H1 (cell line): ENCODE measurements at regions of chr9 and their contacts with region 1.

Region 1: DNA sequence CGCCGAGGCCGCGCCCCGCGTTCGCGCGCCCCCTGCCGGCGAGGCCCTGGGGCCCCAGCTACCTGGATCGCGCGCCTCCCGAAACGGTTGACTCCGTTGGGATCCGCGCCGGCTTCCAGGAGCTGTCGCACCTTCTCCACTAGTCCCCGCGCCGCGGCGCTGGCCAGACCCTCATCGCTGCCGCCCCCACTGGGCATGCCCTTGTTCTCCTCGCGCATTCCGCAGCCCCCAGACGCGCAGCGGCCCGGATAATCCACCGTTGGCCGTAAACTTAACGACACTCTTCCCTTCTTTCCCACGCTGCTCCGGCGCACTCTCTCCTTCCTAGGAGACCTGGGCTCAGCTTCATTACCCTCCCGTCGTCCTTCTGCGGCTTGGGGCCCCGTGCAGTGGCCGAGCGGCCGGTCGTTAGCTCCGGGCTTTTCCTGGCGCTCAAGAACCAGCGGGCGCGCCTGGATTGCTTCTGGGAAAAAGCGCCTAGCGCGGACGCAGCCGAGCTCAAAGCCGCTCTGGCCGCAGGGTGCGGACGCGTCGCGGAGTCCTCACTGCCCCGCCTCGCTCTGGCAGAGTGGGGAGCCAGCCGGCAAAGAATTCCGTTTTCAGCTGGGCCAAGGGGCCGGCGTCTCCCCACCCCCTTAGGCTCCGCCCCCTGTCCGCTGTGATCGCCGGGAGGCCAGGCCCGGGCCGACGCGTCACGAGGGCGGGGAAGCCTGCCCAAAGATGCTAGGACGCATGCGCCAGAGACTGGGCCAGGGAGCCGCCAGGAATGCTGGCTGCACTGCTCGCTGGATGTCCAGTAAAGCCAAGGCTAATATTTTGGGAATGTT is at the start of gene CDKN2B:
- DNase-seq: peak in 1 of 2 experiments; percentile 97
- H3K4me3 ChIP-seq: peak within 1 kb of the TSS; percentile 44 to 78 (median 70)
- H3K27ac ChIP-seq: no peak within 1 kb of the TSS
- H3K4me1 ChIP-seq: peaks cover 3 to 11% (median 5%) of the 10 kb centered on the region in 4 experiments; a peak in 6 of 7 replicates
- H3K27me3 ChIP-seq: peaks cover 28 to 63% (median 45%) of the 10 kb centered on the region in 4 experiments
- CTCF ChIP-seq: peak; percentile 82 to 88 (median 88)
- EP300 ChIP-seq: no peak
- POLR2A ChIP-seq: peak in 1 of 2 experiments; percentile 61; a peak in 2 of 3 replicates
- RAD21 ChIP-seq: peak; percentile 57 to 67
- total RNA-seq, gene CDKN2B: 0.31 and 0.88 TPM in 2 replicates

Region 2: DNA sequence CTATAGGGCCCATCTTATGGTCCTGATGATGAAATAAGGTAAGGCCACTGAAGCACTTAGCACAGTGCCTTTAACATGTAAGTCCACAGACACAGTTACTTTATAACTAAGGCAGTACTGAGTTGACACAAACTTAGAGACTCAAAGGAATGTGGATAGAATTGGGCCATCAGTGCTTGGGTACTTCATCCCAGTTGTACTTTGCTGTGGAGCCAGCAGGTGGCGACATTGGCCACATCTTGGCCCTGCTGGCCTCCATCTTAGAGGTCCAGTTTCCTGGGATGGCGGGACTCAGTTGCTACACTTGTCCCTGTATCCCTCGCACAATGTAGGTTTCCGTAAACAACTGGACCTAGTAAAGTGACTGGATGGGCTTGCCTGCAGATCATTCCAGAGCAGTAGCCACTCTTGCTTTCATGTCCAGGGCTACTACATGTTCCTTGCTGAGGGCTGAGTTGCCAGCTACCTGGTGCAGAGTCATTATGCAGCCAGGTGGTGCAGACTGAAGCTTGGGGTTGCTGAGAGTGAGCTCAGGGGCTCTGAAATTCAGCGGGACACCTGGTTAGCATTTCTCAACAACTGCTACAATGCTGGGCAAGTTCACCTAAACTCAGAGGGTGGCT is 195.9 kb before region 1 on chr9:
- CTCF ChIA-PET with region 1: interaction called, 36 read pairs
- POLR2A ChIA-PET with region 1: no interaction called
- DNase-seq: peak in 1 of 2 experiments; percentile 81
- H3K4me3 ChIP-seq: no peak overlapping the region
- H3K27ac ChIP-seq: no peak overlapping the region
- H3K4me1 ChIP-seq: peaks cover 0 to 2% (median under 1%) of the 10 kb centered on the region in 4 experiments; a peak in 2 of 7 replicates
- H3K27me3 ChIP-seq: no peaks in the 10 kb centered on the region
- CTCF ChIP-seq: peak; percentile 80 to 98 (median 88)
- EP300 ChIP-seq: no peak
- POLR2A ChIP-seq: no peak
- RAD21 ChIP-seq: peak; percentile 84 to 88

Region 3: DNA sequence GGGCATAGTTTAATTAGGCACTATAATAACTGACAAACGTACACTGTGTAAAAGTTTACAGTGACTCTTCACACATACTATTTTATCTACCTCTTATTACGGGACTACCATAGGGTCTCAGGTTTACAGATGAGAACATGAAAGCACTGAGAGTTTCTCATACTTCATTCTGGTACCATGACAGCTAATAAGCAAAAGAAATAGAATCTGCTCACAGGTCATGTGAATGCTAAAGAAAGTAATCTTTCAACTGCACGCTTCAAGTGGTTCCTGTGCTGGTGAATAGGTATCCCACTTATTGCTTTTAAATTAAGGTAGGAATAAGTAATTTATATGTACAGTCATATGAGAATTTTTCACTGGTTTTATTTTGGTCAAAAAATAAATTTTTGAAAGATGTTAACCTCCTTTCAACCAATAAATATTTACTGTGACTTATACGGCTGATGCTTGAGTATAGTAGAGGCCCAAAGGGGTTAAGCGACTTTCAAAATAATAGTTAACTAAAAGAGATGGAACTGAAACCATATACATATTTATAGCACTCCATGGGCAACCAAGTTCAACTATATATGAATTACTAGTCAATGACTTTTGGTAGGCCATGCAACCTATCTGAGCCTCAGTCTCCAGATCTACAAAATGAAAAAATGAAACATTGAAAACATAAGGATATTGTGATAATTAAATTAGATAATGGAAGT is 22.8 kb before region 1 on chr9:
- CTCF ChIA-PET with region 1: interaction called, 46 read pairs
- POLR2A ChIA-PET with region 1: no interaction called
- DNase-seq: no peak
- H3K4me3 ChIP-seq: no peak overlapping the region
- H3K27ac ChIP-seq: no peak overlapping the region
- H3K4me1 ChIP-seq: peaks cover 1 to 5% (median 3%) of the 10 kb centered on the region in 4 experiments; a peak in 4 of 7 replicates
- H3K27me3 ChIP-seq: peaks cover 27 to 57% (median 38%) of the 10 kb centered on the region in 4 experiments
- CTCF ChIP-seq: no peak
- EP300 ChIP-seq: no peak
- POLR2A ChIP-seq: no peak
- RAD21 ChIP-seq: no peak

Region 4: GRCh38 chr9:22022396-22022795 is 13.4 kb after region 1 on chr9:
- CTCF ChIA-PET with region 1: interaction called, 10 read pairs
- POLR2A ChIA-PET with region 1: interaction called, 3 read pairs
- DNase-seq: no peak
- H3K4me3 ChIP-seq: no peak overlapping the region
- H3K27ac ChIP-seq: no peak overlapping the region
- H3K4me1 ChIP-seq: no peaks in the 10 kb centered on the region
- H3K27me3 ChIP-seq: no peaks in the 10 kb centered on the region
- CTCF ChIP-seq: no peak
- EP300 ChIP-seq: no peak
- POLR2A ChIP-seq: no peak
- RAD21 ChIP-seq: no peak

Region 5: DNA sequence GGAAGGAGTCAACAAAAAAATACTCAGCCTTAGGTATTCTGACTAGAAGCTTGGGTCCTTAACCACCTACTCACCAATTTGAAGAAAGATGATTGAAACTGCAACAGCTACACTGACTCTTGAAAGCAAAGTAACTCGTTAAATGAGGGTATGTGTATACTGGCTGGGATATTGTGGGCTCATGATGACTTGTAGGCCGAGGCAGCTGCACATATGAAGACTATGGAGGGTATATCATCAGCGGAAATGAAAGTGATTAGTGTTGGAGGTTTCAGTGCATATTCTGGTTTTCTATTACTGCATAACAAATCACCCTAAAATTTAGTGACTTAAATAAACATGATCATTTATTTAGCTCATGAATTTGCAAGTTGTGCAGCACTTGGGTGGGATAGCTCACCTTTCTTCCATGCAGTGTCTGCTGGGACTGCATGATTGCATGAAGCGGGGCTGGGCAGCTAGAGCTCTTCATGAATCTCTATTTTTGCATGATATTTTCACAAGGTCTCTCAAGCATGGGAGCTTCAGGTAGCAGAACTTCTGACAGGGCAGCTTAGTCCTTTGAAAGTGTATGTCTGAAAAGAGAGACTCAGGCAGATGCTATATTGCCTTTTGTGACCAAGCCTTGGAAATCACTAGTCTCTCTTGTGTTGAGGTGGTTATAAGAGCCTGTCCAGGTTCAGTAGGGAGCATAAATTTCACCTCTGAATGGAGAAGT is 96.2 kb after region 1 on chr9:
- CTCF ChIA-PET with region 1: interaction called, 13 read pairs
- POLR2A ChIA-PET with region 1: no interaction called
- DNase-seq: no peak
- H3K4me3 ChIP-seq: no peak overlapping the region
- H3K27ac ChIP-seq: no peak overlapping the region
- H3K4me1 ChIP-seq: peaks cover 0 to 7% (median 2%) of the 10 kb centered on the region in 4 experiments; a peak in 3 of 7 replicates
- H3K27me3 ChIP-seq: no peaks in the 10 kb centered on the region; a peak in 1 of 7 replicates
- CTCF ChIP-seq: no peak
- EP300 ChIP-seq: no peak
- POLR2A ChIP-seq: no peak
- RAD21 ChIP-seq: no peak